ENCODE measurements at regions of chr1 and their contacts with region 1.

Region 1: GRCh38 chr1:191993549-191993948 is 164.7 kb upstream of the RGS18 start:
- DNase-seq: no peak
- H3K4me3 ChIP-seq: no peak overlapping the region
- H3K27ac ChIP-seq: no peak overlapping the region
- H3K4me1 ChIP-seq: no peaks in the 10 kb centered on the region
- H3K27me3 ChIP-seq: no peaks in the 10 kb centered on the region
- CTCF ChIP-seq: peak in 2 of 11 experiments; percentile 5 to 9
- POLR2A ChIP-seq: no peak

Region 2: GRCh38 chr1:191912517-191912916 is 81.0 kb before region 1 on chr1:
- intact Hi-C with region 1: no loop called
- DNase-seq: no peak
- H3K4me3 ChIP-seq: no peak overlapping the region
- H3K27ac ChIP-seq: no peak overlapping the region
- H3K4me1 ChIP-seq: no peaks in the 10 kb centered on the region
- H3K27me3 ChIP-seq: no peaks in the 10 kb centered on the region
- CTCF ChIP-seq: no peak
- POLR2A ChIP-seq: no peak

Region 3: DNA sequence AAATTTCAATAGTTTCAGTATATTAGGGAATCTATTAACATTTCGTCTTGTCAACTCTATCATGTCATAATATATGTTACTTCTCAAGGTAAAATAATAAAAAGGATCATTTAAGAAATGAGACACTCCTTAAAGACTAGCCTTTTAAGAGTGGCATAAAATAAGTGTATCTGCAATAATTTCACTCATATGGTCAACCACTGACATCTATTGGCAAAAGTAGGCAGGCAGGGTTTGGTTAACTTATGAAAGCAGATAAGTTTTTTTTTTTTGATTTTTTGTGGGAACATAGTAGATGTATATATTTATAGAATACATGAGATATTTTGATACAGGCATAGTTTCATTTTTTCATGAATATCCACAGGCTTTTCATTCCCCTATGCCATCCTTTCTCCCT is 317.7 kb after region 1 on chr1:
- intact Hi-C with region 1: loop called (anchors 10 kb)
- DNase-seq: no peak
- H3K4me3 ChIP-seq: no peak overlapping the region
- H3K27ac ChIP-seq: no peak overlapping the region
- H3K4me1 ChIP-seq: no peaks in the 10 kb centered on the region
- H3K27me3 ChIP-seq: no peaks in the 10 kb centered on the region
- CTCF ChIP-seq: peak in 6 of 11 experiments; percentile 19 to 39 (median 28)
- POLR2A ChIP-seq: no peak

Measured in spleen (tissue), 13 donors.